H1 (cell line): ENCODE measurements at regions of chr16 and their contacts with region 1.

Region 1: DNA sequence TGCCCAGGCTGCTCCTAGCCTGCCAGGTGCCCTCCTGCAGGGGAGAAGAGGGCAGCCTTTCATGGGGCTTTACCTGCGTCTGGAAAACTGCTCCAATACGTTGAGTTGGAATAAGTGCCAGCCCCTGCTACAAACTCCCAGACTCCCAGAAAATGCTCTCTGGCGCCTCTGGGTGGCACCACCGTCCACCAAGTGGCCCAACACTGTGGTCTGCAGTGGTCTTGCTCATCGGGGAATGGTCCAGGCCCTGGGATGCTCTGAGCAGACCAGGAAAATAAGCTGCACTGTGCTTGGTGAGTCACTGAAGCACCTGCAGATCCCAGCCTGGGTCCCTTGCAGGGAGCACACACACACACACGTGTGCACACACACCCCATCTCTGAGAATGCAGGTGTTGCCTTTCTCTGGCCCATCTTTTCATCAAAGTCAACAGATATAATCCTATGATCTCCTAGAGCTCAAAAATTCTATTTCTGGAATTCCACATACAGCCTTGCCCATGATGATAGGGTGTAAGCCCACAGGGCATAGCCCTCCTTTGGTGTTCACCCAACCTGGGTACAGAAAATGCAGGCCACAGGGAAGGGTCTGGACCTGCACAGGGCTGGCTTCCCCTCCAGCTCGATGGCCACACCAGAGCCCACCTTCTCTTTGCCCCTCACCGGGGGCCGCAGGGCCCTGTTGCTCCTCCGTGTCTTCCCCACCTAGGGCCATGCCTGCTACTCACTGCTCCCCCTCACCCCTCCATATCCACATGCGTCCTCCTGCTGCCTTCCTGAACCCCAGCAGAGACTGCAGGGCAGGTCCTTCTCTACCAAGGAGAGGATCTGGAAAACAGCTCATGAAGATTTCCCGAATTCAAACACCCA is 20.5 kb downstream of the CDIP1 start:
- DNase-seq: peak in 1 of 2 experiments; percentile 79
- H3K4me3 ChIP-seq: no peak overlapping the region
- H3K27ac ChIP-seq: no peak overlapping the region; the same call in 1 of the 2 replicates
- H3K4me1 ChIP-seq: peaks cover 0 to 18% (median 13%) of the 10 kb centered on the region in 4 experiments; a peak in 6 of 7 replicates
- H3K27me3 ChIP-seq: no peaks in the 10 kb centered on the region
- CTCF ChIP-seq: peak; percentile 91 to 97 (median 94)
- EP300 ChIP-seq: no peak
- POLR2A ChIP-seq: 0 out of 3 replicates have a peak, but pooled peaks of 1 of the 2 experiments have one; percentile 27
- RAD21 ChIP-seq: peak; percentile 98 to 99

Region 2: DNA sequence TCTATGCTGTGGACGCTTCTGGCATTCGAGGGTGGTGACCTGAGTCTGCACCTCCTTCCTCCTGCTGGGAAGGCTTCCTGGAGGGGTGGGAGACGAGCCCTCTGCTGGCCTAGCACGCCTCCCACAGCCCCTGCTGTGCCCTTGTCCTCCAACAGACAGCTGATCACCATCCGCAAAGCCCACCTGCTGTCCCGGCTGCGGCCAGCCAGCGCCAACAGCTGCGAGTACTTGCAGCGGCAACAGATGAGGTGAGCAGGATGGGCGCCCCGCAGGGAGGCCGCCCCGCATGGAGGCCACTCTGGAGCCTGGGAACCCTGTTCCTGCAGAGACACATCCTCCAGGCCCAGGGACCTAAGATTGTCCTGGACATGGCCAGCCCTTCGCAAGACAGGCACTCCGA is 75.0 kb after region 1 on chr16:
- CTCF ChIA-PET with region 1: interaction called, 157 read pairs
- POLR2A ChIA-PET with region 1: interaction called, 6 read pairs
- DNase-seq: peak; percentile 49 to 71
- H3K4me3 ChIP-seq: no peak overlapping the region
- H3K27ac ChIP-seq: no peak overlapping the region
- H3K4me1 ChIP-seq: peaks cover 0 to 18% (median 10%) of the 10 kb centered on the region in 4 experiments; a peak in 6 of 7 replicates
- H3K27me3 ChIP-seq: no peaks in the 10 kb centered on the region; a peak in 1 of 7 replicates
- CTCF ChIP-seq: no peak
- EP300 ChIP-seq: no peak; a peak in 1 of 3 replicates
- POLR2A ChIP-seq: no peak
- RAD21 ChIP-seq: no peak; a peak in 1 of 4 replicates